Endothelial cell of umbilical vein (primary cell): ENCODE measurements at regions of chr9 and their contacts with region 1.

Region 1: DNA sequence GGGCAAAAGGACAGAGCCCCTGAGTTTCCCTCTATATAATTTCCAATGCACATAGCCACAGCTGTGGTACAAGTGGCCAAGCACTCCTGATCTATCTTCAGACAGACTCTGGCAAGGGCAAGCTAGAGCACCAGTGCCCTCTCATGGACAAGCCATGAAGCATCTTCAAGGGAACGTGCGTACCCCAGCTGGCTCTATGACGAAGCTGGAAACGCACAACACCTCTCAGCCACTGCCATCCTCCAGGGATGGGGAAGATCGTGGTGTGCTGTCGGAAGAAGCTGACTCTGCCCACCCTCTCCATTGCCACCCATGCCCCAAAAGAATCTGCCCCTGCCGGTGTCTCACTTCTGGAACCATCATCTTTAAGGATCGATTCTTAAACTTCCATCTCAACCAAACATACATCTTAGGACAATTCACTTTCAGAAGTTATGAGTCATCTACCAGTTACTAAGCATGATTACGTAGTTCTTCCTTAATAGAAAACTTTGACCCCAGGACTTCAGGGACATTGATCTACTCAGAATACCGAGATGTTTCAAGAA is 482.9 kb downstream of the AGTPBP1 start:
- DNase-seq: peak; percentile 80
- H3K4me3 ChIP-seq: peak overlapping the region in 1 of 3 experiments; percentile 41
- H3K27ac ChIP-seq: peak overlapping the region; percentile 27
- H3K4me1 ChIP-seq: peaks cover 15% of the 10 kb centered on the region
- H3K27me3 ChIP-seq: peaks cover 0 to 4% of the 10 kb centered on the region in 2 experiments
- CTCF ChIP-seq: peak; percentile 69 to 82
- POLR2A ChIP-seq: no peak

Region 2: DNA sequence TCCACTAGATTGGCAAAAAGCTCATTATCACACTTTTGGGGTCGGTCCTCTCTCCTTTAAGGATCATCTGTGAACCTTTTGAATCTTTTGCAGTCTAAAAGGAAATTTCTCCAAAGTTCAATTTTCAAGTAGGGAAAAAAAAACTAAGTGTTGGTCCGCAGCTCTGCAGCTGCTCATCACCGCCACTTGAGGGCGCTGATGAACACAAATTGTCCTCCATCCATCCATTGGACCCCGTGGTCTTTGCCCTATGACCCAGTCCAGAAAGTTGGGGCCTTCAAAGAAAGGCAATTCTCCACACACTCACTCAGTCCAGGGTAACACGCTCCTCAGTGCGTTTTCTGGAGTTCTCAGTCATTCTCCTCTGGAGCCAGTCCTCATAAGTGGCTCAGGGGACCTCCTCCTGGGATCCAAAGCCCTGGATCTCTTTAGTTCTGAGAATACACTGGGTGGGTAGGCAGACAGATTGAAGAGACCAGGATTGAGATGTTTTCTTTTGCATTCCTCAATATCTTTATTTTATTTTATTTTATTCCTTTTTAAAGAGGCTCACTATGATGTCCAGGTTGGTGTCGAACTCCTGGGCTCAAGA is 854.7 kb before region 1 on chr9:
- CTCF ChIA-PET with region 1: interaction called, 3 read pairs
- POLR2A ChIA-PET with region 1: no interaction called
- dilution Hi-C with region 1: no loop called
- intact Hi-C with region 1: loop called (anchors 2 kb)
- DNase-seq: peak; percentile 3
- H3K4me3 ChIP-seq: no peak overlapping the region
- H3K27ac ChIP-seq: no peak overlapping the region
- H3K4me1 ChIP-seq: no peaks in the 10 kb centered on the region
- H3K27me3 ChIP-seq: no peaks in the 10 kb centered on the region
- CTCF ChIP-seq: peak; percentile 54 to 55
- POLR2A ChIP-seq: no peak

Region 3: GRCh38 chr9:84697509-84698114 is 561.3 kb before region 1 on chr9:
- CTCF ChIA-PET with region 1: interaction called, 69 read pairs
- POLR2A ChIA-PET with region 1: no interaction called
- dilution Hi-C with region 1: no loop called
- intact Hi-C with region 1: no loop called
- DNase-seq: peak; percentile 52
- H3K4me3 ChIP-seq: no peak overlapping the region
- H3K27ac ChIP-seq: no peak overlapping the region
- H3K4me1 ChIP-seq: peaks cover 5% of the 10 kb centered on the region
- H3K27me3 ChIP-seq: peaks cover 0 to 2% of the 10 kb centered on the region in 2 experiments
- CTCF ChIP-seq: peak; percentile 66 to 82
- POLR2A ChIP-seq: no peak

Region 4: GRCh38 chr9:85108229-85108628 is 150.7 kb before region 1 on chr9:
- CTCF ChIA-PET with region 1: no interaction called
- POLR2A ChIA-PET with region 1: no interaction called
- dilution Hi-C with region 1: no loop called
- intact Hi-C with region 1: loop called (anchors 10 kb)
- DNase-seq: no peak
- H3K4me3 ChIP-seq: no peak overlapping the region
- H3K27ac ChIP-seq: no peak overlapping the region
- H3K4me1 ChIP-seq: no peaks in the 10 kb centered on the region
- H3K27me3 ChIP-seq: no peaks in the 10 kb centered on the region
- CTCF ChIP-seq: no peak
- POLR2A ChIP-seq: no peak

Region 5: DNA sequence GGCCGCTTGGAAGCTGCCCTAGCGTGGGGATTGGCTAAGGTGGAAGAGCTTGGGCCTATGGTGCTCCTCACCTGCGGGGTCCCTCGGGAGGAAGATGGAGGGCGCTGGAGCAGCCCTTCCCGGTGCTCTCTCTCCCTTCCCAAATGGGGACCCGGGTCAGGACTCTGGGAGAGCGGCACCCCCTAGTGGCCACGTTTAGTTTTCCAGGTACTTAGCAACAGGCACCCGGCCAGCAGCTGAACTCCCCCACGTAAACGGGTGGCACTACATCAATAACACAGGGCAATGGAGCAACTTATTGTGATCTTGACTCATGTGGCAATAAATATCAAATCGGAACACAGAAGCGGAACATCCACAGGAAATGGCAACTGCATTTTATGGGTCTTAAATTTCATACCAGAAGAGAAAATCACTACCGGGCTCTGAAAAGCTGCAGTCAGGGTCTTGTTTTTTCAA is 166.3 kb after region 1 on chr9:
- CTCF ChIA-PET with region 1: interaction called, 17 read pairs
- POLR2A ChIA-PET with region 1: interaction called, 4 read pairs
- dilution Hi-C with region 1: no loop called
- intact Hi-C with region 1: loop called (anchors 2 kb)
- DNase-seq: peak; percentile 84
- H3K4me3 ChIP-seq: no peak overlapping the region
- H3K27ac ChIP-seq: no peak overlapping the region
- H3K4me1 ChIP-seq: peaks cover 26% of the 10 kb centered on the region
- H3K27me3 ChIP-seq: no peaks in the 10 kb centered on the region
- CTCF ChIP-seq: peak; percentile 74 to 78
- POLR2A ChIP-seq: no peak